ENCODE measurements at regions of chr1 and their contacts with region 1.

Region 1: GRCh38 chr1:192445848-192446489 is 129.2 kb downstream of the RGS21 start:
- DNase-seq: peak; percentile 71
- H3K4me3 ChIP-seq: no peak overlapping the region
- H3K27ac ChIP-seq: peak overlapping the region; percentile 57
- H3K4me1 ChIP-seq: peaks cover 33% of the 10 kb centered on the region
- H3K27me3 ChIP-seq: no peaks in the 10 kb centered on the region
- CTCF ChIP-seq: peak; percentile 44 to 49
- POLR2A ChIP-seq: no peak

Region 2: DNA sequence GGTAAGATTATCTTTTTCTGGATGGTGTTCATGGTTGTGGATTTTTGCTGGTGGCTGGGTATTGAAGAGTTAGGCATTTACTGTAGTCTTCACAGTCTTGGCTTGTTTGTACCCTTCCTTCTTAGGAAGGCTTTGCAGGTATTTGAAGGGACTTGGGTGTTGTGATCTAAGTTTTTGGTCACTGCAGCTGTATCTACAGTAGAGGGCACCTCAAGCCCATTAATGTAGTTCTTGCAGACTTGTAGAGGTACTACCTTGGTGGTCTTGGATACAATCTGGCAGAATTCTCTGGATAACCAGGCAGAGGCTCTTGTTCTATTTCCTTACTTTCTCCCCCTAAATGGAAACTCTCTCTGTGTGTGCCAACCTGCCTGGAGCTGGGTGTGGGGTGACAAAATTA is 1812.5 kb before region 1 on chr1:
- CTCF ChIA-PET with region 1: no interaction called
- POLR2A ChIA-PET with region 1: no interaction called
- dilution Hi-C with region 1: no loop called
- intact Hi-C with region 1: loop called (anchors 10 kb)
- DNase-seq: no peak
- H3K4me3 ChIP-seq: no peak overlapping the region
- H3K27ac ChIP-seq: no peak overlapping the region
- H3K4me1 ChIP-seq: no peaks in the 10 kb centered on the region
- H3K27me3 ChIP-seq: no peaks in the 10 kb centered on the region
- CTCF ChIP-seq: no peak
- POLR2A ChIP-seq: no peak

Region 3: GRCh38 chr1:190754666-190755065 is 1691.3 kb before region 1 on chr1:
- CTCF ChIA-PET with region 1: no interaction called
- POLR2A ChIA-PET with region 1: no interaction called
- dilution Hi-C with region 1: no loop called
- intact Hi-C with region 1: loop called (anchors 10 kb)
- DNase-seq: peak; percentile 61
- H3K4me3 ChIP-seq: no peak overlapping the region
- H3K27ac ChIP-seq: no peak overlapping the region
- H3K4me1 ChIP-seq: no peaks in the 10 kb centered on the region
- H3K27me3 ChIP-seq: no peaks in the 10 kb centered on the region
- CTCF ChIP-seq: no peak
- POLR2A ChIP-seq: no peak

Region 4: DNA sequence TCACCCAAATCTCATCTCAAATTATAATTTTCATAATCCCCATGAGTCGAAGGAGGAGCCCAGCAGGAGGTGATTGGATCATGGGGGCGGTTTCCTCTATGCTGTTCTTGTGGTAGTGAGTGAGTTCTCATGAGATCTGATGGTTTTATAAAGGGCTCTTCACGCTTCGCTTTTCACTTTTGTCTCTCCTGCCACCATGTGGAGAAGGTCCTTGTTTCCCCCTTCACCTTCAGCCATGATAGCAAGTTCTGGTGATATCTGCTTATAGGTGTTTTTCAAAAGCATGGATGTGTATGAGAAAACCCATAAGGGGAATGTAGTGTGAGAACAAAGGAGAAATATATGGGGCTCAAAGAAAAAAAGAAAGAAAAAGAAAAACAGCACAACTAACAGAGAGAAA is 693.6 kb before region 1 on chr1:
- CTCF ChIA-PET with region 1: no interaction called
- POLR2A ChIA-PET with region 1: no interaction called
- dilution Hi-C with region 1: no loop called
- intact Hi-C with region 1: loop called (anchors 10 kb)
- DNase-seq: no peak
- H3K4me3 ChIP-seq: no peak overlapping the region
- H3K27ac ChIP-seq: no peak overlapping the region
- H3K4me1 ChIP-seq: no peaks in the 10 kb centered on the region
- H3K27me3 ChIP-seq: no peaks in the 10 kb centered on the region
- CTCF ChIP-seq: no peak
- POLR2A ChIP-seq: no peak

Region 5: DNA sequence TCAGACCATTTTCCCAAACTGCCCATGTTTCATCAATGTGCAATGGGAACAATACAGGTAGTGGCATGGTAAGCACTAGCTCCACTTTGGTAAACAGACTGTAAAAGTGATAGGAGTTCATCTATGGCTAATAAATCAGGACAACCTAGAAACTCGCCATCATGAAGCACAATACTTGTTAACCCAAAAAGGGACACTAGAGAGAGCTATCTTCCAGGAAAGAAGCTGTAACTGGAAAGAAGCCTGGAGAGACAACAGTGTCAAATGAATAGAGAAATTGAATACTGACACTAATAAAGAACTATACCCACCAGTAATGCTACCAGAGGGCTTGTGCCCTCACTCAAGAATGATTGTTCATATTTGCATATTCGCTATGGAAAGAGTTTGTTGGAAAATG is 452.4 kb before region 1 on chr1:
- CTCF ChIA-PET with region 1: interaction called, 6 read pairs
- POLR2A ChIA-PET with region 1: no interaction called
- dilution Hi-C with region 1: no loop called
- intact Hi-C with region 1: loop called (anchors 1 kb)
- DNase-seq: peak; percentile 58
- H3K4me3 ChIP-seq: no peak overlapping the region
- H3K27ac ChIP-seq: no peak overlapping the region
- H3K4me1 ChIP-seq: no peaks in the 10 kb centered on the region
- H3K27me3 ChIP-seq: no peaks in the 10 kb centered on the region
- CTCF ChIP-seq: peak in 1 of 2 donors; percentile 15
- POLR2A ChIP-seq: no peak

Region 6: DNA sequence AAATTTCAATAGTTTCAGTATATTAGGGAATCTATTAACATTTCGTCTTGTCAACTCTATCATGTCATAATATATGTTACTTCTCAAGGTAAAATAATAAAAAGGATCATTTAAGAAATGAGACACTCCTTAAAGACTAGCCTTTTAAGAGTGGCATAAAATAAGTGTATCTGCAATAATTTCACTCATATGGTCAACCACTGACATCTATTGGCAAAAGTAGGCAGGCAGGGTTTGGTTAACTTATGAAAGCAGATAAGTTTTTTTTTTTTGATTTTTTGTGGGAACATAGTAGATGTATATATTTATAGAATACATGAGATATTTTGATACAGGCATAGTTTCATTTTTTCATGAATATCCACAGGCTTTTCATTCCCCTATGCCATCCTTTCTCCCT is 134.7 kb before region 1 on chr1:
- CTCF ChIA-PET with region 1: interaction called, 4 read pairs
- POLR2A ChIA-PET with region 1: no interaction called
- dilution Hi-C with region 1: no loop called
- intact Hi-C with region 1: loop called (anchors 1 kb)
- DNase-seq: peak; percentile 84
- H3K4me3 ChIP-seq: no peak overlapping the region
- H3K27ac ChIP-seq: no peak overlapping the region
- H3K4me1 ChIP-seq: no peaks in the 10 kb centered on the region
- H3K27me3 ChIP-seq: no peaks in the 10 kb centered on the region
- CTCF ChIP-seq: peak; percentile 50 to 55
- POLR2A ChIP-seq: no peak

Region 7: GRCh38 chr1:192489748-192490147 is 43.8 kb after region 1 on chr1:
- CTCF ChIA-PET with region 1: no interaction called
- POLR2A ChIA-PET with region 1: no interaction called
- dilution Hi-C with region 1: no loop called
- intact Hi-C with region 1: loop called (anchors 1 kb)
- DNase-seq: peak; percentile 95
- H3K4me3 ChIP-seq: no peak overlapping the region
- H3K27ac ChIP-seq: peak overlapping the region; percentile 53
- H3K4me1 ChIP-seq: peaks cover 4% of the 10 kb centered on the region
- H3K27me3 ChIP-seq: no peaks in the 10 kb centered on the region
- CTCF ChIP-seq: no peak
- POLR2A ChIP-seq: no peak